H1 (cell line): ENCODE measurements at regions of chr3 and their contacts with region 1.

Region 1: DNA sequence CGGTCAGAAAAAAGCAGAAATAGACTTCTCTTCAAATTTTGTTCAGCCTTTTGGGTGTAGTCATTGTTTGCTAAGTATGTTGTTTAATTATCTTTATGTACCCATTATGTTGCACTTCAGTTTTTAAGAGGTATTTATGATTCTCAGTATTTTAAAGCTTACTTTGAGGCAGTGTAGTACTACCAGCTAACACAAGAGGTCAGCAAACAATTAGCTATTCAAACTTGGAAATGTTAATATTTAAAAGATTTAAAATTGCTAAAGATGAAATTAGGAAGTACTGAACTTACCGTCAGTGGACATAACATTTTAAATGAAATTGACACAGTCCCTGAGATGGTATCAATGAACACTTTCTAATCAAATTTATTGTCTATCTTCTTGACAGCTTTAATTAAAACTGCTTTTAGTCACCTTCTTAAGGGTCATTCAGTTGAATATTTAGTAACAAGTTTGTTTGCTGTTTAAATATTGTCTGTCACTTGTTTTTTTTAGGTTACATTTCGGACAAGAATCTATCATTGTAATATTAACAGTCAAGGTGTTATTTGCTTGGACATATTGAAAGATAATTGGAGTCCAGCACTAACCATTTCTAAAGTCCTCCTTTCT is 28.1 kb downstream of the NKIRAS1 start:
- DNase-seq: no peak
- H3K4me3 ChIP-seq: no peak overlapping the region
- H3K27ac ChIP-seq: no peak overlapping the region
- H3K4me1 ChIP-seq: peaks cover 0 to 7% (median 1%) of the 10 kb centered on the region in 4 experiments; a peak in 3 of 7 replicates
- H3K27me3 ChIP-seq: no peaks in the 10 kb centered on the region
- CTCF ChIP-seq: peak in 2 of 3 experiments; percentile 5 to 53; a peak in 2 of 4 replicates
- EP300 ChIP-seq: no peak
- POLR2A ChIP-seq: no peak
- RAD21 ChIP-seq: peak in 1 of 2 experiments; percentile 64

Region 2: DNA sequence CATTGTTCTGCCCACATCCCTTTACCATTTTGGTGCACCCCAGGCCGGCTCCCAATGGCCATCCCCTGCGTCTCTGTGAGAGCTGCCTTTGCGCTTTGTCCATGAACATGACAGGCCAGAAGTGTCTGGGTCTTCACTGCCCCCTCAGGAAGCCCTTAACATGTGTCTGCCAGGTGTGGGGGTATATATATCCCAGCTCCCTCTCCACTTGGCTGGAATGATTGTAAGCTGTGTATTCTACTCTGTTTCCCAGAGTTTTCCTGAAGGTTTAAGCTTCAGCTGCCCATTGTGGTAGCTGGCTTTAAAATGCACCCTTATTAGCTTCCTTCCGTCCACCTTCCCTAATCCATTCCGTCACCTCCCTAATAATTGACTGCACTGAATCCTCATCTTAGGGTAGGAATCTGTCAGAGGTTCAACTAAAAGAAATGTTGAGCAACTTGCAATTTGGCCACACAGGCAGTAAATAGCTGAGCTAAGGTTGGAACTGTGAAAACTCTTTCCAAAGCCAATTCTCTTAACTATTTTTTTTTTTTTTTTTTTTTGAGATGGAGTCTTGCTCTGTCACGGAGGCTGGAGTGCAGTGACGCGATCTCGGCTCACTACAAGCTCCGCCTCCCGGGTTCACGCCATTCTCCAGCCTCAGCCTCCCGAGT is 113.3 kb before region 1 on chr3:
- CTCF ChIA-PET with region 1: no interaction called
- POLR2A ChIA-PET with region 1: no interaction called
- DNase-seq: no peak
- H3K4me3 ChIP-seq: no peak overlapping the region
- H3K27ac ChIP-seq: no peak overlapping the region
- H3K4me1 ChIP-seq: no peaks in the 10 kb centered on the region
- H3K27me3 ChIP-seq: no peaks in the 10 kb centered on the region
- CTCF ChIP-seq: no peak
- EP300 ChIP-seq: no peak
- POLR2A ChIP-seq: no peak
- RAD21 ChIP-seq: no peak

Region 3: GRCh38 chr3:23845326-23846221 is 43.1 kb before region 1 on chr3:
- CTCF ChIA-PET with region 1: interaction called, 11 read pairs
- POLR2A ChIA-PET with region 1: no interaction called
- DNase-seq: no peak
- H3K4me3 ChIP-seq: no peak overlapping the region
- H3K27ac ChIP-seq: no peak overlapping the region
- H3K4me1 ChIP-seq: peaks cover 0 to 1% (median 0%) of the 10 kb centered on the region in 4 experiments; a peak in 1 of 7 replicates
- H3K27me3 ChIP-seq: no peaks in the 10 kb centered on the region
- CTCF ChIP-seq: no peak
- EP300 ChIP-seq: no peak
- POLR2A ChIP-seq: no peak
- RAD21 ChIP-seq: no peak

Region 4: GRCh38 chr3:23865595-23866450 is 22.9 kb before region 1 on chr3:
- CTCF ChIA-PET with region 1: interaction called, 13 read pairs
- POLR2A ChIA-PET with region 1: interaction called, 3 read pairs
- DNase-seq: peak in 1 of 2 experiments; percentile 21
- H3K4me3 ChIP-seq: no peak overlapping the region
- H3K27ac ChIP-seq: no peak overlapping the region
- H3K4me1 ChIP-seq: peaks cover 5 to 16% (median 10%) of the 10 kb centered on the region in 4 experiments
- H3K27me3 ChIP-seq: peaks cover 0 to 1% (median 0%) of the 10 kb centered on the region in 4 experiments; a peak in 1 of 7 replicates
- CTCF ChIP-seq: no peak
- EP300 ChIP-seq: no peak
- POLR2A ChIP-seq: 0 out of 3 replicates have a peak, but pooled peaks of 1 of the 2 experiments have one; percentile 14
- RAD21 ChIP-seq: 0 out of 4 replicates have a peak, but pooled peaks of 1 of the 2 experiments have one; percentile 5

Region 5: GRCh38 chr3:23900744-23901143 is 12.0 kb after region 1 on chr3:
- CTCF ChIA-PET with region 1: interaction called, 11 read pairs
- POLR2A ChIA-PET with region 1: interaction called, 3 read pairs
- DNase-seq: no peak
- H3K4me3 ChIP-seq: no peak overlapping the region
- H3K27ac ChIP-seq: no peak overlapping the region
- H3K4me1 ChIP-seq: no peaks in the 10 kb centered on the region
- H3K27me3 ChIP-seq: peaks cover 0 to 1% (median 0%) of the 10 kb centered on the region in 4 experiments; a peak in 1 of 7 replicates
- CTCF ChIP-seq: no peak
- EP300 ChIP-seq: no peak
- POLR2A ChIP-seq: no peak
- RAD21 ChIP-seq: no peak

Region 6: GRCh38 chr3:23981955-23982354 is 93.2 kb after region 1 on chr3:
- CTCF ChIA-PET with region 1: interaction called, 11 read pairs
- POLR2A ChIA-PET with region 1: no interaction called
- DNase-seq: peak in 1 of 2 experiments; percentile 54
- H3K4me3 ChIP-seq: no peak overlapping the region
- H3K27ac ChIP-seq: no peak overlapping the region
- H3K4me1 ChIP-seq: no peaks in the 10 kb centered on the region
- H3K27me3 ChIP-seq: no peaks in the 10 kb centered on the region
- CTCF ChIP-seq: no peak
- EP300 ChIP-seq: no peak
- POLR2A ChIP-seq: no peak
- RAD21 ChIP-seq: no peak